Breast epithelium (tissue), 4 donors: ENCODE measurements at regions of chr16 and their contacts with region 1.

Region 1: DNA sequence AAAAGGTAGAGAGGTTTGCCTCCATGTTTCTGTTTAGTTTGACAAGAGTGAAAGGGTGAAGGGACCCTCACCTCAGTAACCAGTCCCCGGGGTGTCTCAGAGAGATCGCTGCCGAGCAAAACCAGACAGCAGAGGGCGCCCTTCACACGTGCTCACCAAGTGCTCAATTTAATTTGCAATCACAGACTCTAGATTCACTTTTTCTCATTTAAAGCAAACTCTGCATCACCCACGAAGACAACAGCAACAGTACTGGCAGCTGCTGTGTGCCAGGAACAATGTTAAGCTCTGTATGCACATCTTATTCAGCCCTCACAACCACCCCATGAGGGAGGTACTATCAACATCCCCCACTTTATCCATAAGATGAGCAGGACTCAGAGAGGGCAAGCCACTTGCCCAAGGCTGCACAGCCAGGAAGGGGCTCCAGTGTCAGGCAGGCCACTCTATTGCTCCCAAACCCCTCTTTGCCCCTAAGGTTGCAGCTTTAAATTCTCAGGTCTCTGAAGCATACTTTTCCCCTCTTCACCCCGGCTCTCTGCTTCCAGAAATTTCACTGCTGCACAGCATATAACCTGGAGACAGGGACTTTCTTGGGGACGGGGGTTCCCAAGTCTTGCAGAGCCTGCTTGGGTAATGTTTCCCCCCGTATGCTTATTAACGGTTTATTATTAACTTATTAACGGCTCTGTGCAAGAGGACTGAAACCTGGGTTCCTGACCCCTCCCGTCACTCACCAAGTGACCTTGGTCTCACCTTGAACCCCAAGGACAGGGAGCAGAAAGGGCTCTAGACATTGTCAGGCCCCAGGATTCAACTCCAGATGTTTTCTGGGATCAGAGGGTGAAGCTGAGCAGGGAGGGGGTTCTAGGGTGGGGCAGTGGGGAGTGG is 70.9 kb downstream of the CNGB1 start:
- DNase-seq: peak; percentile 52 to 70
- H3K4me3 ChIP-seq: no peak overlapping the region
- H3K27ac ChIP-seq: no peak overlapping the region
- H3K4me1 ChIP-seq: no peaks in the 10 kb centered on the region
- H3K27me3 ChIP-seq: peaks cover 0 to 19% of the 10 kb centered on the region in 2 donors
- CTCF ChIP-seq: peak; percentile 45 to 84 (median 69)
- POLR2A ChIP-seq: no peak

Region 2: GRCh38 chr16:57988929-57989328 is 88.9 kb after region 1 on chr16:
- intact Hi-C with region 1: no loop called
- DNase-seq: peak in 1 of 2 donors; percentile 86
- H3K4me3 ChIP-seq: no peak overlapping the region
- H3K27ac ChIP-seq: peak overlapping the region; percentile 68 to 69
- H3K4me1 ChIP-seq: peaks cover 0 to 10% of the 10 kb centered on the region in 2 donors
- H3K27me3 ChIP-seq: no peaks in the 10 kb centered on the region
- CTCF ChIP-seq: no peak
- POLR2A ChIP-seq: no peak

Region 3: DNA sequence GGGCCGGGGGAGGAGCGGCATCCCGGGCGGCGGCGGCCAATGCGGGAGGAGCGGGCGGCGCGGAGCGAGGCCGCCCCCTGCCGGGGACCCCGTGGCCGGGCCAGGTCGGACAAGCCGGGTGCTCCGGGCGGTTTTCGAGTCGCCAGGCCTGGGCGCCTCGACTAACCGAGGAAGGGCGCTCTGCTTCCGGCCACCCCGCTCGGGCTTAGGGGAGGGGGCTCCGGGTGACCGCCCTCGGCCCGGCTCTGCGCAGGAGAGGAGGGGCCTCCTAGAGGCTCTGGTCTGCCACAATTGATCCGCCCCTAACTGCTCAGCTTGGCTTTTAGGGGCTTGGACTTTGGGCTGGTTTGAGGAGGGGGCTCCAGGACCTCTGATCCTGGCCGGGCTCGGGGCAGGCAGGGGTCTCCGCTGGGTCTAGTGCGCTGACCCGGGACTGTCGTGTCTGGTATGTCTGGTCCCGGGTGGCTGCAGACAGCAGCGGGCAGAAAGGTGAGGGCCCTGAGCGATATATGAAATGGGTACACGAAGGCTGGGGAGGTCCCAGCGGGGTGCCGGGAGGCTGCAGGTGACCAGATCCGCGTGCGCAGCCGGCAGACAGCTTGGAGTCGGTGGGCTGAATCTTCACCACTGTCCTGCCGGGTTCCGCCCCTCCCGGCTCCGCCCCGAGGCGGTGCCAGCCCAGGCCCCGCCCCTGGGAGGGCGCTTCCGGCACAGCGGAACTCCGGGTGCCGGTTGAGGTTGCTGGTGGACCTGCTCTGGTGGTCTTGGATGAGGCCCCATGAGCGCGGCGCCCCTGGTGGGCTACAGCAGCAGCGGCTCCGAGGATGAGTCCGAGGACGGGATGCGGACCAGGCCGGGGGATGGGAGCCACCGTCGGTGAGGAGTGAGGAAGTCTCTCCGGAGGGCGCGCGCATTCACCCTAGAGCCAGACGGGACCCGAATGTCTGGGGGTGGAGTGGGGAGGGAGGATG is 101.0 kb after region 1 on chr16 and contains the start of gene USB1:
- intact Hi-C with region 1: loop called (anchors 5 kb)
- DNase-seq: peak; percentile 71 to 83
- H3K4me3 ChIP-seq: peak within 1 kb of the TSS; percentile 59 to 77 (median 74)
- H3K27ac ChIP-seq: peak within 1 kb of the TSS; percentile 83 to 87
- H3K4me1 ChIP-seq: no peaks in the 10 kb centered on the region
- H3K27me3 ChIP-seq: no peaks in the 10 kb centered on the region
- CTCF ChIP-seq: peak in 2 of 3 donors; percentile 41 to 50
- POLR2A ChIP-seq: peak; percentile 40
- total RNA-seq, gene USB1: 14.5 to 37.0 (median 26.4) TPM